ENCODE measurements at regions of chr4 and their contacts with region 1.

Region 1: GRCh38 chr4:40247350-40247749 is 50.5 kb downstream of the RHOH start:
- DNase-seq: peak in 9 of 10 donors; percentile 52 to 86 (median 70)
- ATAC-seq: peak; percentile 69 to 86
- H3K4me3 Mint-ChIP-seq: peak overlapping the region in 9 of 10 donors; percentile 49 to 84 (median 76)
- H3K27ac Mint-ChIP-seq: peak overlapping the region; percentile 94 to 98 (median 96)
- H3K4me1 Mint-ChIP-seq: peaks cover 53 to 90% (median 82%) of the 10 kb centered on the region in 4 donors
- H3K27me3 Mint-ChIP-seq: no peaks in the 10 kb centered on the region

Region 2: GRCh38 chr4:40114206-40114605 is 133.1 kb before region 1 on chr4:
- POLR2A ChIA-PET with region 1: no interaction called
- DNase-seq: no peak
- ATAC-seq: no peak
- H3K4me3 Mint-ChIP-seq: no peak overlapping the region
- H3K27ac Mint-ChIP-seq: peak overlapping the region in 1 of 10 donors; percentile 2
- H3K4me1 Mint-ChIP-seq: peaks cover 0 to 4% (median 1%) of the 10 kb centered on the region in 4 donors
- H3K27me3 Mint-ChIP-seq: no peaks in the 10 kb centered on the region

Region 3: DNA sequence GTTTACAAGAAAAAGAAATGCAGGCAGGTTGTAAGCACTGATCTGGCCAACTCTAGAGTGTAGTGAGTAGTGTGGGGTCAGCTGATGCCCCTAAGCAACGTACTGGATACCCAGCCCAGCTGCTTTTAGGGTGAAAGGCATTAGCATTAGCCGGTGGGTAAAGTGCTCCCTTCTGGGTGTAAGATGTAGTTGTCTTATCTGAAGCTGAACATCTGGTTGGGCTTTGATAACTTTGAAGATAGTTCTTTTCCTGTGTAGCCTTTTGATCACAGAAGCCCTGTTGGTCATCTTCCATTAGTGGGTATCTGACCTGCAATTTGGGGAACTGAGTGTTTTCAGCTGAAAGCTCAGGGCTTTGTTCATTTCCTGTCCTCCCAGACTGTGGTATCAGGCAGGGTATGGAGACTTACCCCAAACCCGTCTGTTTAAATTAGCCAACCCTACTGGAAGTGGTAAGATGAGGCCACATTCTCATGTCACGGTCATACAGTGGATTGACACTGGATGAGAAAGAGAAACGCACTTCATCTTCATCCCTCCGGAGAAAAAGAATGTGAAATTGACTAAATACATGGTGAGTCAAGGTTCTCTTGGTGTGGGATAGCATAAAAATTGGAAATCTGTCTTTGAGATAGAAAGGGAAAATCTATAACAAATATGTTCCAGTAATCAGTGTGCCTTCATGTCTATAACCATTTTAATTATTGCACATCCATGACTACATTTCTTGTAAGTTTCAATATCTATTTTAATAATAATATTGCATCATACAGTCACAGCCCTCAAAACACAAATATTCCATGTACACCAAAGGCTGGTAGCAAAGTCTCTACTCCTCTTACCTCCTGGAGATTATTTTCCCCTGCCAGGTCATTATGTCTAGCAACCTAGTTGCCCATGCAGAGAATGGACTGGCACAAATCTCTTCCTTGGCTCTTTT is 41.8 kb before region 1 on chr4:
- POLR2A ChIA-PET with region 1: interaction called, 79 read pairs
- DNase-seq: no peak
- ATAC-seq: peak; percentile 29 to 42
- H3K4me3 Mint-ChIP-seq: peak overlapping the region; percentile 94 to 100 (median 98)
- H3K27ac Mint-ChIP-seq: peak overlapping the region; percentile 88 to 100 (median 95)
- H3K4me1 Mint-ChIP-seq: peaks cover 32 to 91% (median 69%) of the 10 kb centered on the region in 4 donors
- H3K27me3 Mint-ChIP-seq: no peaks in the 10 kb centered on the region

Region 4: DNA sequence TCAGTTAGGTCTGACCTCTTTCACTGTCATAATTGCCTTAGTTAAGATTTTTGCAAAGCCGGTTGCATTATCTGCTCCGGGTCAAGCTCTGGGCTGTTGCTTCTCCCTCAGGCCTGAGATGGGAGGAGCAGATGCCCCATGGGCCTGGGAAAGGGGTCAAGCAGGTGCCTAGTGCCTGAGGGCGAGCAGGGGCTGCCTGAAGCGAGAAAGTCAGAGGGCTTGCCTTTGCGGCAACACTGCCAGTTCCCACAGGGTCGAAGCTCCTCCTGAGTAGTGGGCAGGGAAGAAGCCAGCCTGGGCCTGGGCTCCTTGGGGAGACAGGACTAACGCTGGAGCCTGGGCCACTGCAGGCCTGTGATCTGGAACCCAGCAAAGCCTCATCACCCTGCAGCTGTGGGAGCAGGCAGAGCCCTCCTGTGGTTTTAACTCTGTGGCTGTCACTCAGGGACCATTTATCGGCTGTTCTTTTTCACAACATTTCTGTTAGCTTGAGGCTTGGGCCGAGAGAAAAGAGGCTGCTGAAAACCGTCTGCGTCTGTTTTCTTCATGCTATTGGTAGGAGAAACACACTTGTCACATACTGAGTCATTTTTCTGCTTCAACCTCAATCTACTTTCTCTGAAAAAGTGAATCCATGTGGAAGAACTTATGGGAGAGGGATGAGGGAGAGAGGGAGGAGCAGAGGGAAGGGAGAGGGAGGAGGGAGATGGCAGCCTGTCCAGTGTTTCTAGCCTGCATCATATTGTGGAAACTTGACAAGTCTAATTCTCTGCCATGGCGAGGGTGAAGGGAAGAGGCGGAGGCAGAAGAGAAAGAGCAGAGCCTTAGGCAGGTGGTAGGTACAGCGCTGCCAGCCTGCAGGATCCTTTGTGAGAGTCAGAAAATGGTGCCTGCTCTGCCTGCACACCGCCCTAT is 17.9 kb after region 1 on chr4:
- POLR2A ChIA-PET with region 1: interaction called, 11 read pairs
- DNase-seq: peak in 9 of 10 donors; percentile 28 to 82 (median 59)
- ATAC-seq: peak; percentile 81 to 83
- H3K4me3 Mint-ChIP-seq: peak overlapping the region; percentile 68 to 91 (median 84)
- H3K27ac Mint-ChIP-seq: peak overlapping the region; percentile 94 to 99 (median 98)
- H3K4me1 Mint-ChIP-seq: peaks cover 37 to 76% (median 70%) of the 10 kb centered on the region in 4 donors
- H3K27me3 Mint-ChIP-seq: no peaks in the 10 kb centered on the region